ENCODE measurements at regions of chr2 and their contacts with region 1.

Region 1: GRCh38 chr2:121961761-121962160 is 206.3 kb downstream of the TSN start:
- DNase-seq: no peak
- ATAC-seq: no peak
- H3K4me3 ChIP-seq: no peak overlapping the region
- H3K27ac ChIP-seq: no peak overlapping the region
- H3K4me1 ChIP-seq: no peaks in the 10 kb centered on the region
- H3K27me3 ChIP-seq: no peaks in the 10 kb centered on the region
- CTCF ChIP-seq: no peak

Region 2: DNA sequence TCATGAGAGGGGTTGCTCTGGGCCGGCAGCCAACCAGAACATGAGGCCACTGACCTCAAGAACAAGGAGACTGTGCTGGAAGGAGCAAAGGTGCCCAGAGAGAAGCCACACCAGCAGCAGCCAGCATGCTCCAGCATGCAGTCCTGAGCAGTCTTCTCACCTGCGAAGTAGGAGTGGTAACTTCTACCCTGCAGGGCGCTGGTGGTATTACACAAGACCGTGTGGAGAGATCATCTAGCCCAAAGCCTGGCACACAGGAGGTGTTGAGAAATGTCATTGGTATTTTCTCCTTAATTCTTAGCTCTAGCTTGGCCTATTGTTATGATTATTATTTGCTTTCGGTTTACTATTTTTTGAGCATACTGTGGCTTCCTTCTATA is 73.6 kb before region 1 on chr2:
- CTCF ChIA-PET with region 1: interaction called, 10 read pairs
- POLR2A ChIA-PET with region 1: no interaction called
- in situ Hi-C with region 1: no loop called
- intact Hi-C with region 1: no loop called
- DNase-seq: no peak
- ATAC-seq: 0 out of 2 replicates have a peak, but pooled peaks have one; percentile 60
- H3K4me3 ChIP-seq: no peak overlapping the region
- H3K27ac ChIP-seq: no peak overlapping the region
- H3K4me1 ChIP-seq: no peaks in the 10 kb centered on the region
- H3K27me3 ChIP-seq: no peaks in the 10 kb centered on the region
- CTCF ChIP-seq: peak; percentile 53

Region 3: GRCh38 chr2:122988395-122989221 is 1026.8 kb after region 1 on chr2:
- CTCF ChIA-PET with region 1: no interaction called
- POLR2A ChIA-PET with region 1: no interaction called
- in situ Hi-C with region 1: no loop called
- intact Hi-C with region 1: no loop called
- DNase-seq: no peak
- ATAC-seq: no peak
- H3K4me3 ChIP-seq: no peak overlapping the region
- H3K27ac ChIP-seq: no peak overlapping the region
- H3K4me1 ChIP-seq: no peaks in the 10 kb centered on the region
- H3K27me3 ChIP-seq: no peaks in the 10 kb centered on the region
- CTCF ChIP-seq: no peak

Measured in Panc1 (cell line).